ENCODE measurements at regions of chrX and their contacts with region 1.

Region 1: DNA sequence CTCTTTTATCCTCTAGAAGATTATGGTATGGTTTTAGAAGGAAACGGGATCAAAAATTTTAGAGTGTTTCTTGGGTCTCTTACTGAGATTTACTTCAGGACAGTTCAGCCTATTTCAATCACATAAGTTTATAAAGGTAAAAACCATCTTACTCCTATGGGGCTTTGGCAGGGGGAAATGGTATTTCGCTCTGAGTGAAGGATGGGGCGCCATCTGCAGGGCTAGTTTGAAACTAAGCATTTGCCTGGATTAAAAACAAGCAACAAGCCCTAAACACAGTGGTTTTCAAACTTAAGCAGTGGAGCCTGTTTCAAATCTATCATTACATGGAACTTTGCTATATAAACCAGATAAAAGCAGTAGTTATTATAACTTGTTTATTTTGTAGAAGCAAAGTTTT is 361.5 kb upstream of the FMR1 start:
- DNase-seq: peak in 1 of 2 experiments; percentile 63
- H3K4me3 ChIP-seq: no peak overlapping the region
- H3K27ac ChIP-seq: no peak overlapping the region
- H3K4me1 ChIP-seq: no peaks in the 10 kb centered on the region
- H3K27me3 ChIP-seq: no peaks in the 10 kb centered on the region
- CTCF ChIP-seq: peak in 2 of 3 experiments; percentile 37 to 48; a peak in 3 of 4 replicates
- EP300 ChIP-seq: no peak
- POLR2A ChIP-seq: no peak
- RAD21 ChIP-seq: peak; percentile 67 to 75

Region 2: GRCh38 chrX:147333821-147334220 is 216.4 kb before region 1 on chrX:
- CTCF ChIA-PET with region 1: no interaction called
- POLR2A ChIA-PET with region 1: no interaction called
- DNase-seq: no peak
- H3K4me3 ChIP-seq: no peak overlapping the region
- H3K27ac ChIP-seq: no peak overlapping the region
- H3K4me1 ChIP-seq: no peaks in the 10 kb centered on the region
- H3K27me3 ChIP-seq: no peaks in the 10 kb centered on the region
- CTCF ChIP-seq: no peak
- EP300 ChIP-seq: no peak
- POLR2A ChIP-seq: no peak
- RAD21 ChIP-seq: no peak

Region 3: GRCh38 chrX:147476008-147476407 is 74.2 kb before region 1 on chrX:
- CTCF ChIA-PET with region 1: interaction called, 13 read pairs
- POLR2A ChIA-PET with region 1: no interaction called
- DNase-seq: no peak
- H3K4me3 ChIP-seq: no peak overlapping the region
- H3K27ac ChIP-seq: no peak overlapping the region
- H3K4me1 ChIP-seq: no peaks in the 10 kb centered on the region
- H3K27me3 ChIP-seq: no peaks in the 10 kb centered on the region
- CTCF ChIP-seq: peak in 2 of 3 experiments; percentile 42 to 43; a peak in 3 of 4 replicates
- EP300 ChIP-seq: no peak
- POLR2A ChIP-seq: no peak
- RAD21 ChIP-seq: peak; percentile 57 to 68